MCF 10A (cell line): ENCODE measurements at regions of chr14 and their contacts with region 1.

Region 1: GRCh38 chr14:28608851-28609828 is 157.4 kb upstream of the FOXG1 start:
- DNase-seq: peak; percentile 78
- H3K4me3 Mint-ChIP-seq: no peak overlapping the region
- H3K27ac Mint-ChIP-seq: no peak overlapping the region
- H3K4me1 Mint-ChIP-seq: peaks cover 3% of the 10 kb centered on the region
- H3K27me3 Mint-ChIP-seq: no peaks in the 10 kb centered on the region
- CTCF ChIP-seq: peak; percentile 88

Region 2: DNA sequence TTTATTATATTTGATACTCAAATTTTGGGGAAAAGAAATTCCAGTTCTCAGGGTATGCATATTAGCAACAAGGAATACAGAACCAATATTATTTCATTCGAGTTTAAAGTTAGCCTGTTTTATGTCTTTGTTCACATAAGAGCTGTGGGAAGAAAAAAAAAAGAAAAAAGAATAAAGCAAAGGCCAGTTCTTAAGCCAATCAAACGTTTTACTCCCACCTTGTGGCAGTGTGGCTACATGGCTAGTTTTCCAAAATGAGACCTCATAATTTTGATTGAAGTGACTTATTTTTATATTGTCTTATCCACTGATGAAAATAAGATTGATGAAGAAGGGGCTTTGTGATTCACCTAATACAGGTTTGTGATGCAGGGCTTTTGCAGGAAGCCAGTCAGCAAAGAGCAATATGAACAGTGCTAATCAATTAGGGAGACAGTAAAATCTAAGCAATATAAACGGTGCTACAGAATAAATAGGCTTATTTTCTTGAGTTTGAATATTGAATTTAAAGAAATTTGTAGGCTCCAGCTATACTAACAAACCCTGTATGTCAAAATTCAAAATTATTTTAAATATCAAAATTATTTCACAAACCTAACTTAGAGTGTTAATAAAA is 466.6 kb before region 1 on chr14:
- CTCF ChIA-PET with region 1: interaction called, 3 read pairs
- POLR2A ChIA-PET with region 1: no interaction called
- intact Hi-C with region 1: loop called (anchors 2 kb)
- DNase-seq: peak; percentile 44
- H3K4me3 Mint-ChIP-seq: no peak overlapping the region
- H3K27ac Mint-ChIP-seq: no peak overlapping the region
- H3K4me1 Mint-ChIP-seq: no peaks in the 10 kb centered on the region
- H3K27me3 Mint-ChIP-seq: no peaks in the 10 kb centered on the region
- CTCF ChIP-seq: peak; percentile 48

Region 3: DNA sequence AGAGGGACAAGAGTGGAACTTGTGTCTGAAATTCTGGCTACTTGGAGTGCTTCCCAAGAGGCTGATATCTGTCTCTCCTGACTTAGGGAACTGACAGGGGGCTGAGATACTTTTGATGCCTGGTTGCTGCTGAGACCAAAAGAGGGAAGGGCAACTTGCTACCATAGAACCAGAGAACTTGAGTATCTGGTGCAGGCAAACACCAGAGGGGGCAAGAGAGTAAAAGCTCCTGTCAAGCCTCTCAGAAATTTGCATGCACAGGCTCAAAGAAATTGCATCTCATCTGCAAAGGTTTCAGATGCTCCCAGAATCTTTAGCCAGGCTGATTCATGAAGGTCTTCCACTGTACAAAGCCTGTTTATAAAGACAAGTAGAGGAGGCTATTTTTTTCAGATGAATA is 233.8 kb before region 1 on chr14:
- CTCF ChIA-PET with region 1: interaction called, 20 read pairs
- POLR2A ChIA-PET with region 1: no interaction called
- intact Hi-C with region 1: loop called (anchors 1 kb)
- DNase-seq: peak; percentile 64
- H3K4me3 Mint-ChIP-seq: no peak overlapping the region
- H3K27ac Mint-ChIP-seq: peak overlapping the region; percentile 31
- H3K4me1 Mint-ChIP-seq: peaks cover 11% of the 10 kb centered on the region
- H3K27me3 Mint-ChIP-seq: no peaks in the 10 kb centered on the region
- CTCF ChIP-seq: peak; percentile 35

Region 4: DNA sequence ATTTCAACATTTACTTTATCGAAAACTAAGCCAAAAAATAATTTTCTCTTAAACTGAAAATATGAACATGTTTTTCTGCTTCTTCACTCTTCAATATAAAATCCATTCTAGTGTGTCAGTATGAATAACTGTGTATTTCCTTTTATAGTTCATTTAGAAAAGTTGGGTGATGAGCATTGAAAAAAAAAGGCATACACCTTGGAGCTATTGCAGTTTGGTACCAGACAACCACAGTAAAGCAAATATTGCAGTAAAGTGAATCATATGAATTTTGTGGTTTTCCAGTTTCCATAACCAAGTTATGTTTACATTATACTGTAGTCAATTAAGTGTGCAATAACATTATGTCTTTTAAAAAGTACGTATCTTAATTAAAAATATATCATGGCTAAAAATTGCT is 37.5 kb before region 1 on chr14:
- CTCF ChIA-PET with region 1: no interaction called
- POLR2A ChIA-PET with region 1: no interaction called
- intact Hi-C with region 1: no loop called
- DNase-seq: peak; percentile 49
- H3K4me3 Mint-ChIP-seq: no peak overlapping the region
- H3K27ac Mint-ChIP-seq: no peak overlapping the region
- H3K4me1 Mint-ChIP-seq: peaks cover 5% of the 10 kb centered on the region
- H3K27me3 Mint-ChIP-seq: no peaks in the 10 kb centered on the region
- CTCF ChIP-seq: no peak

Region 5: GRCh38 chr14:28596391-28596790 is 12.7 kb before region 1 on chr14:
- CTCF ChIA-PET with region 1: interaction called, 31 read pairs
- POLR2A ChIA-PET with region 1: no interaction called
- intact Hi-C with region 1: no loop called
- DNase-seq: peak; percentile 77
- H3K4me3 Mint-ChIP-seq: no peak overlapping the region
- H3K27ac Mint-ChIP-seq: no peak overlapping the region
- H3K4me1 Mint-ChIP-seq: peaks cover 22% of the 10 kb centered on the region
- H3K27me3 Mint-ChIP-seq: no peaks in the 10 kb centered on the region
- CTCF ChIP-seq: peak; percentile 31

Region 6: GRCh38 chr14:28751467-28752058 is 142.4 kb after region 1 on chr14:
- CTCF ChIA-PET with region 1: no interaction called
- POLR2A ChIA-PET with region 1: no interaction called
- intact Hi-C with region 1: no loop called
- DNase-seq: peak; percentile 73
- H3K4me3 Mint-ChIP-seq: no peak overlapping the region
- H3K27ac Mint-ChIP-seq: no peak overlapping the region
- H3K4me1 Mint-ChIP-seq: peaks cover 13% of the 10 kb centered on the region
- H3K27me3 Mint-ChIP-seq: peaks cover 26% of the 10 kb centered on the region
- CTCF ChIP-seq: peak; percentile 46